Dendritic cell treated with granulocyte-macrophage colony-stimulating factor and Interleukin-4, amounts not matched to agents 40 ng/mL and 50 ng/mL, for 4 days (primary cell): ENCODE measurements at regions of chr20 and their contacts with region 1.

Region 1: GRCh38 chr20:36861875-36862801 is 13.8 kb upstream of the TLDC2 start:
- H3K4me3 Mint-ChIP-seq: peak overlapping the region; percentile 76
- H3K27ac Mint-ChIP-seq: peak overlapping the region; percentile 73
- H3K4me1 Mint-ChIP-seq: peaks cover 77% of the 10 kb centered on the region
- H3K27me3 Mint-ChIP-seq: peaks cover 23% of the 10 kb centered on the region

Region 2: DNA sequence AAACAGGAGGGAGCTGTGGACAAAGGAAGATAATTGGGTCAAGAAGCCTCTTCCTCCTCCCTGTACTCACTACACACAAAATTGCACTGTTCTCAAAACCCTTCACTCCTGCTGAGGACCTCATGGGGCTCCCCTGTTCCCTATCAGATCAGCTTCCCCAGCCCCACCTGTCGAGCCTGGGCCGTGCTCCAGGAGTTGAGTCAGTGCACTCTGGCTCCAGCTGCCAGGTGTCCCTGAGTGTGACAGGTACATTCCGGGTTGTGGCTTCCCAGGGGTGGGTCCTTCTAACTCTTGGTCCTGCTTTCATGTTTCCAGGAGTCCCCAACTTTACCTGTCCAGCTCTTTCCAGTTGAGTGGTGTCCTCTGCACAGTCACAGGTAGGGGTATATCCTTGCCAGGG is 248.2 kb before region 1 on chr20:
- intact Hi-C with region 1: loop called (anchors 10 kb)
- H3K4me3 Mint-ChIP-seq: no peak overlapping the region
- H3K27ac Mint-ChIP-seq: no peak overlapping the region
- H3K4me1 Mint-ChIP-seq: peaks cover 6% of the 10 kb centered on the region
- H3K27me3 Mint-ChIP-seq: no peaks in the 10 kb centered on the region

Region 3: GRCh38 chr20:36773597-36774390 is 88.3 kb before region 1 on chr20 and contains the start of gene DSN1:
- intact Hi-C with region 1: loop called (anchors 10 kb)
- H3K4me3 Mint-ChIP-seq: peak within 1 kb of the TSS; percentile 83
- H3K27ac Mint-ChIP-seq: peak within 1 kb of the TSS; percentile 91
- H3K4me1 Mint-ChIP-seq: peaks cover 71% of the 10 kb centered on the region
- H3K27me3 Mint-ChIP-seq: no peaks in the 10 kb centered on the region

Region 4: DNA sequence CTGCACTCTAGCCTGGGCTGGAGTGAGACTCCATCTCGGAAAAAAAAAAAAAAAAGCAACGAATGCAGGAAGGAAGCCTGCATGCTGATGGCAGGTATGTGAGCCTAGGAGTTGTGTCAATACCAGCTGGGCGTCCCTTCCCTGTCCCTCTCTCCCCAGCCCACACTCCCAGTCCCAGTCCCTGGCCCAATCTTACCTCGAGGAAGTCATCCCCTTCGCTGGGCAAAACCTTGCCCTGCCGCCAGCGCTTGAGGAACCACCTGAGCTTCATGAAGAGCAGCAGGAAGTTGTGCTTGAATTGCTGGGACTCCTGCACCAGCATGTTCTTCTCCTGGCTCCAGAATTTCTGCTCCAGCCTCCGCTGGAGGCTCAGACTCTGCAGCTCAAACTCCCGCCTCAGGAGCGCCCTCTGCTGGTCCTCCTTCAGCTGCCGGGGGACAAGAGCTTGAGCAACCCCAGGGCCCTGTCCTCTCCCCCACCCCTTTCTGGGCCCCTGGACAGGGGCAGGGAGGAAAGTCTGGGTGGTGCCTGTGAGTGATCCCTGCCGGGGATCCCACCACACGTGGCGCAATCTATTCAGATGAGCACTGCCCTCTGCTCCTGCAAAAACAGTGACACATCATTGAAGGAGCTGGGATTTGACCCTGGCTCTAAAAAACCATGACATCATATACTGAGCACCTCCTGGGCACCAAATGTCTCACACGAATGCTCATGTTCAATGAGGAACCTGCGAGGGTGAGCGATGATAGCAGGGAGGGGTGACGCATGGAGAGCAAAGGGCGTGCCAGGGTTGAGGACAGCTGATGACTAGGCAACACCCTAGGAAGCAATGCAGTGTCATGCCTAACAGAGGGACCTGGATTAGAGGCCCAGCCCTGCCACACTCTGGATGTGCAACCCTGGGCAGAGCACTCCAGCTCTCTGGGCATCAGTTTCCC is 53.6 kb before region 1 on chr20:
- intact Hi-C with region 1: loop called (anchors 2 kb)
- H3K4me3 Mint-ChIP-seq: no peak overlapping the region
- H3K27ac Mint-ChIP-seq: peak overlapping the region; percentile 83
- H3K4me1 Mint-ChIP-seq: peaks cover 17% of the 10 kb centered on the region
- H3K27me3 Mint-ChIP-seq: no peaks in the 10 kb centered on the region

Region 5: GRCh38 chr20:36847009-36847709 is 15.0 kb before region 1 on chr20:
- intact Hi-C with region 1: loop called (anchors 2 kb)
- H3K4me3 Mint-ChIP-seq: no peak overlapping the region
- H3K27ac Mint-ChIP-seq: peak overlapping the region; percentile 37
- H3K4me1 Mint-ChIP-seq: peaks cover 76% of the 10 kb centered on the region
- H3K27me3 Mint-ChIP-seq: no peaks in the 10 kb centered on the region